WTC11 (cell line): ENCODE measurements at regions of chr6 and their contacts with region 1.

Region 1: DNA sequence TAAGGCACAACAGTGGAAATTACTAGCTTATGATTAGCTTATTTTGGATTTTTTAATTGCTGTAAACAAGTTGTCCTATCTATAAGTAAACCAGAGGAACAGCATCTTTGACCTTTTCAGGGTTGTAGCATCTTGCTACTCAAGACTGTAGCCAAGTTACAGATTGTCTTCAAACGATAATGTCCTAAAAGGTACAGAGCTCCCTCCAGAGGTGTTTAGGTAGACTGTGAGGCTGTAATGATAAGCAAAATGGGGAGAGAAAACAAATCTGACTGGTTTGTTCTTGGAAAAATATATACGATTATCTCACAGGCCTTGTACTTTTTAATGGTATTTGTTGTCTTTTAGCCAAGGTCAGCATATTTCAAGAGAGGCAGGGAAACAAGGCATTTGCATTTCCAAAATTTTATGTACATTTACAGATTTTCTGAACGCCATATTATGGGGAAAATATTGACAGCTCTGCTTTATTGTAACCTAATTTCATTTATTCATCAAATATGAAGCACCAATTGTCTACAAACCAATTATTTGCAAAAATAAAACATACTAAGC is 273.4 kb downstream of the MEI4 start:
- DNase-seq: no peak
- ATAC-seq: peak; percentile 89
- H3K4me3 Mint-ChIP-seq: no peak overlapping the region
- H3K27ac Mint-ChIP-seq: no peak overlapping the region
- H3K4me1 Mint-ChIP-seq: no peaks in the 10 kb centered on the region
- H3K27me3 Mint-ChIP-seq: no peaks in the 10 kb centered on the region
- CTCF ChIP-seq: no peak

Region 2: DNA sequence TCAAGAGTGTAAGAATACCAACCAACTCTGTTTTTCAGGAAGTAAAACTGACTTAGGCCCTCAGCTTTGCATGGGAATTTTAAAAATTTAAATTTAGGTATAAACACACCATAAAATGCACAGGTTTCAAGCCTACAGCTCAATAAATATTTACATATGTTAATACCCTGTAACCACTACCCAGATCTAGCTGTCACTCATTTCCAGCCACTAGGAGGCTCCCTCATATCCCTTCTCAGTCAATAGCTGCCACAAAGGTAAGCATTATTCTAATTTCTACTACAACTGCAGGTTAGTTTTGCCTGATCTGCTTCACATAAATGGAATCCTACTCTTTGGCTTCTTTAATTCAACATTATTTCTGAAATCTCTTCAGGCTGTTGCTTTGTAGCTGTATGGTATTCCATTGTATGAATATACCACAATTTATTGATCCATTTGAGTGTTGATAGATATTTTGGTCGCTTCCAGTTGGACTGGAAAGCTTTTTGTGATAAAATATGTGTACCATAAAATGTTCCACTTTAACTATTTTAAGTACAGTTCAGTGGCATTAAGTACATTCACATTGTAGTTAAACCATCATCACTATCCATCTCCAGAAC is 305.9 kb before region 1 on chr6:
- CTCF ChIA-PET with region 1: interaction called, 11 read pairs
- POLR2A ChIA-PET with region 1: no interaction called
- DNase-seq: peak; percentile 34
- ATAC-seq: peak; percentile 92
- H3K4me3 Mint-ChIP-seq: no peak overlapping the region
- H3K27ac Mint-ChIP-seq: no peak overlapping the region
- H3K4me1 Mint-ChIP-seq: peaks cover 15% of the 10 kb centered on the region
- H3K27me3 Mint-ChIP-seq: no peaks in the 10 kb centered on the region
- CTCF ChIP-seq: peak; percentile 40; the same call in 1 of the 2 replicates